Transverse colon (tissue), 4 donors: ENCODE measurements at regions of chr10 and their contacts with region 1.

Region 1: DNA sequence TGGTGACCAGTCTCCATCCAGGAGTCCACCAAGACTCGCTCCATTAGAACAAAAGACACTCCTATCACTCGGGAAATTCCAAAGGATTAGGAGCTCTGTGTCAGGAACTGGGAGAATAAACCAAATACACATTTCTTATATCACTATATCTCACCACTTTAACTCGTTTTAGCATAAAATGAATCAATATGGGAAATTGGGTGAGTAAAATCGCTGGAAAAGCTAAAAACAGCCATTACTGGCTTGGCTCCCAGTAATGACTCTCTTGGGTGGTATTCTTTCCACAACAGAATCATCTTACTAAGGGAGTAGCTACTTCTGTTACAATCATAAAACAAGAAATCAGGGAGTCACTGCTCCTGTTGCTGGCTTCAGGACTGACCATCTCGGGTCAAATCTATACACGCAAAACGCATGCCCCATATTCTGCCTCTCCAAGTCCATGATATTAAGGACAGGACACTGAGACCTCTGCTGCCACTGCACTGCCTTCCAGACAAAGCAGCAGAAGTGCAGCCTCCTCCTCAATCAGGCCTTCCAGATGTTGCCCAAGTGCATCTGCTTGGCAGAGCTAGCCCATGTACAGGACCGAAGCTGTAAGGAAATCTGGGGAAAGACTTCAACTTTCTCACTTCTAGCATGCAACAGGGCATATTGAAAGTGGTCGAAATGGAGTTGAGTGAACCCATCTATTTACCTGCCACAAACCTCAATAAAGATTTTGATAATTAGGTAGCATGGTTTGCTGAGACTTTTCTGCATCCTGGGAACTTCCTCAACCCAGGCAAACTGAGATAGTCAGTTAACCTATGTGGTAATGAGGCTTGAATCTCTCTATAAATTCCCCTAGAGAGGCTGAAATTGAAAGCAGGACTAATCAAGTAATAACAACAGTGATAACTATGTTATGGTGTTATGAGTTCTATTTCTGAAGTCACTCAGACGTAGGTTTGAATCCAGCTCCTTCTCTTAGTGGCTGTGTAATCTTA is 14.4 kb upstream of the PANK1 start:
- DNase-seq: no peak
- H3K4me3 ChIP-seq: no peak overlapping the region
- H3K27ac ChIP-seq: no peak overlapping the region
- H3K4me1 ChIP-seq: peaks cover 0 to 4% (median under 1%) of the 10 kb centered on the region in 4 donors
- H3K27me3 ChIP-seq: no peaks in the 10 kb centered on the region
- CTCF ChIP-seq: no peak
- EP300 ChIP-seq: no peak
- POLR2A ChIP-seq: no peak

Region 2: GRCh38 chr10:89391917-89392756 is 267.3 kb before region 1 on chr10 and contains the start of gene IFIT1:
- in situ Hi-C with region 1: no loop called
- intact Hi-C with region 1: no loop called
- DNase-seq: peak; percentile 59
- H3K4me3 ChIP-seq: peak within 1 kb of the TSS; percentile 24 to 56 (median 38)
- H3K27ac ChIP-seq: peak within 1 kb of the TSS; percentile 59 to 90 (median 78)
- H3K4me1 ChIP-seq: peaks cover 8 to 27% (median 21%) of the 10 kb centered on the region in 4 donors
- H3K27me3 ChIP-seq: no peaks in the 10 kb centered on the region
- CTCF ChIP-seq: no peak
- EP300 ChIP-seq: no peak
- POLR2A ChIP-seq: no peak
- total RNA-seq, gene IFIT1: 1.1 to 18.5 (median 9.4) TPM

Region 3: GRCh38 chr10:89684604-89685003 is 25.2 kb after region 1 on chr10:
- in situ Hi-C with region 1: no loop called
- intact Hi-C with region 1: no loop called
- DNase-seq: no peak
- H3K4me3 ChIP-seq: no peak overlapping the region
- H3K27ac ChIP-seq: no peak overlapping the region
- H3K4me1 ChIP-seq: no peaks in the 10 kb centered on the region
- H3K27me3 ChIP-seq: no peaks in the 10 kb centered on the region
- CTCF ChIP-seq: no peak
- EP300 ChIP-seq: no peak
- POLR2A ChIP-seq: no peak

Region 4: DNA sequence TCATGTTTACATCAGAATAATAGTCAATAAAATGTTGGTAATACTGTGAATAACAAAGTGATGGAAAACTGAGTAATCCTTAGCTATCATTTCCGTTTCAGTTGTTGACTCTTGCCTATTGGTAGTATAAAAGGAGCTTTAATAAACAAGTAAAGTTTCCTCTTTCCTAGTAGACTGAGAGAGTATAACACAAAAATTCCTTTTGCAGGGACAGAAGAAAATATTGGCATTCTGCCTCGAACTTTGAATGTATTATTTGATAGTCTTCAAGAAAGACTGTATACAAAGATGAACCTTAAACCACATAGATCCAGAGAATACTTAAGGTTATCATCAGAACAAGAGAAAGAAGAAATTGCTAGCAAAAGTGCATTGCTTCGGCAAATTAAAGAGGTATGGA is 51.3 kb after region 1 on chr10:
- in situ Hi-C with region 1: no loop called
- intact Hi-C with region 1: loop called (anchors 2 kb)
- DNase-seq: no peak
- H3K4me3 ChIP-seq: no peak overlapping the region
- H3K27ac ChIP-seq: no peak overlapping the region
- H3K4me1 ChIP-seq: peaks cover 0 to 8% (median under 1%) of the 10 kb centered on the region in 4 donors
- H3K27me3 ChIP-seq: no peaks in the 10 kb centered on the region
- CTCF ChIP-seq: no peak
- EP300 ChIP-seq: no peak
- POLR2A ChIP-seq: no peak